GM18951 (cell line): ENCODE measurements at regions of chr3 and their contacts with region 1.

Region 1: DNA sequence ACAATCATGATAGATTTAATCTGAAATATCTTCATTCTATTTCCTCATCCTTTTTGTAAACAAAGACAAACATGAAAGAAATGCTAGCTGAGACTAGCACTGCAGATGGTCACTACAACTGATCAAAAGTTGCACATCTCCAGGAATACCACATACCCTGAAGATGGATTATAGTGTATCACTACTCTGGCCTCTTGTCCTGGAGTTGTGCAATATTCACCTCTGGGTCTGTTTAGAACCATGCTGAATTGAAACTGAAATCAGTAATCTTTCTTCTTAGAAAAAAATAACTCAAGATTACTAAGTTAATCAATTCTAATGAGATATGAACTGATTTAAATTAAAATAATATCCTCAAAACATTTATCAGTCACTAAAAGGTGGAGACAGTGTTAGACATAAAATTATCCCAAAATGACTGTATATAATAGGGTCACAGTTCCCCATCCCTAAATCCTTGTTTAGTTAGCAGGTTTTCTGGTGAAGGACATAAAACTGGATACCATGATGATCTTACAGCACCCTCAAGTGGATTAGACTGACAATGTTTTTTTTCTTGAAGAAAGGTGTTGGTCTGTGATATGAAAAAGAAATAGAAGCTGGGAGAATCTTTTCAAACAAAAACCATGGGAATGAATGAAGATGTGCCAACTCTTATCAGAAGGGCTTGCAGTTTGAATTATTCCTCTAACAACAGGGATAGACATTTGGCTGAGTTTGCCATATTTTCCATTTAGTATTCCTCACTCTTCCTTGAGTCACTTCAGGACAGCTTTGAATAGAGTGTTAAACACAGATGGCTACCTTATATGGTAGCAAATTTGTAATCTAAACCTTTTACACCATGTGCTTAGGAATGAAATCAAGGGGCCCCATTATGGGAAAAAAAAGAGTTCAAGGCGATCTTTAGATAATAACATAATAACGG is 7.1 kb upstream of the TTC14 start:
- POLR2A ChIP-seq: no peak

Region 2: GRCh38 chr3:179811321-179812095 is 783.4 kb before region 1 on chr3:
- in situ Hi-C with region 1: loop called (anchors 10 kb)
- POLR2A ChIP-seq: no peak

Region 3: DNA sequence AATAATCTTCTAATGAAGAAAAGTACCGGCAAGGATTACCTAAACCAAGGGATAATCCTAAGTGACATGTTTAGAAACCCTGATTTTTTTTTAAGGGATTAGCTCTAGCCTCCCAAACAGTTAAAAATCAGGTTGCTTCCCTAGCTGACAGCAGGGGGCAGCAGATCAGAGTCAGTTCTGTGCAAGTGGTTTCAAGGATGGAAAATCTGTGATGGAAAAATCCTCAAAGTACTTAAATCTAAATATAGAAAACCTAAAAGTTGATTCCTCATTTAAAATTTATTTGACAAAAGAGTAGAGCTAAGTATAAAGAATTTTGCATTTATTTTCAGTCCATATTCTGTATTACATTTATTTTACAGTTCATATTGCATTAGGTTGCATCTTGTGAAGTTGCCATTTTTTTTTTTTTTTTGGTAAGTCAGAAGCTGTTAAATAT is 665.8 kb before region 1 on chr3:
- in situ Hi-C with region 1: loop called (anchors 25 kb)
- POLR2A ChIP-seq: no peak